Mammary epithelial cell (primary cell): ENCODE measurements at regions of chrX and their contacts with region 1.

Region 1: DNA sequence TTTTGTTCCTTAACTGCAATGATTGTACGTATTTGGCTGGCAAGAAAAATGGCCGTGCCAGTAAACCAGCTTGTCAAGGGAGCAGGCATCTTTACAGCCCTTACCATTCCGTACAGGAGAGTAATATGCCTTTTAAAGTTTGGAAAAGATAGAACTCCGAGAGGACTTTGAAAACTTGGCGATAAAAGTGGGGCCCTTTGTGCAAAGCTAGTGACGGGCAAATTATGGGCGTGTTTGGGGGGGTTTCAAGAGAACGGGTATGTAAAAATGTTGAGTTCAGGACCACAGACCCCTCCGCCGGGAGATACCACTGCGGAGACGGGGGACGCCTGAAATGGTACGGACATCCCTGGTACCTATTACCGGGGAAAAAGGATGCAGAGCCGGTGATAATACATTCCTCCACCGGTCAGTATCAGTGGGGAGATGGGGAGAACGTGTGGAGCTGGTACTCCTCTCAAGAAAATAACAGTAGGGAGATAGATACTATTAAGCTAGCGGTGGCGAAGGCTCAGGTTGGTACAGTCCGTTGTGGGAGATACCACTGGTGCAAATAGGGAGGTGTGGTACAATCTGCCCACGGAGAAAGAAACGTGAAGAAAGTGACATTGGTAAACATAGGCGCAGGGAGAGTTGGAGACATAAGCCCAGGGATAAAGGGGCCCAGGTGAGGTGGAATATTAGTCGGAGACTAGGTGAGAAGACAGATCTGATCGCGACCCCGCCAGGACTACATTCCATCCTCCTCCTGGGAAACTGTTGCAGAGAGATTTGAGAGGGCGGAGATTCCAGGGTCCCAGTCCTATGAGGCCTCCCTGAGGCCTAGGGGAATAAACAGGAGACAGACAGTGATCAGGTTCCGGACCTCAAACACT is 14.5 kb downstream of the SPACA5 start:
- DNase-seq: peak; percentile 76
- H3K4me3 ChIP-seq: peak overlapping the region; percentile 49 to 58 (median 56)
- H3K27ac ChIP-seq: peak overlapping the region; percentile 88
- H3K4me1 ChIP-seq: no peaks in the 10 kb centered on the region
- H3K27me3 ChIP-seq: no peaks in the 10 kb centered on the region
- CTCF ChIP-seq: no peak

Region 2: GRCh38 chrX:47430925-47431324 is 590.3 kb before region 1 on chrX:
- CTCF ChIA-PET with region 1: no interaction called
- dilution Hi-C with region 1: no loop called
- in situ Hi-C with region 1: no loop called
- intact Hi-C with region 1: no loop called
- DNase-seq: no peak
- H3K4me3 ChIP-seq: no peak overlapping the region
- H3K27ac ChIP-seq: no peak overlapping the region
- H3K4me1 ChIP-seq: no peaks in the 10 kb centered on the region
- H3K27me3 ChIP-seq: no peaks in the 10 kb centered on the region
- CTCF ChIP-seq: no peak

Region 3: GRCh38 chrX:47540754-47541538 is 480.3 kb before region 1 on chrX:
- CTCF ChIA-PET with region 1: no interaction called
- dilution Hi-C with region 1: no loop called
- in situ Hi-C with region 1: no loop called
- intact Hi-C with region 1: loop called (anchors 1 kb)
- DNase-seq: peak; percentile 80
- H3K4me3 ChIP-seq: no peak overlapping the region
- H3K27ac ChIP-seq: peak overlapping the region; percentile 3
- H3K4me1 ChIP-seq: no peaks in the 10 kb centered on the region
- H3K27me3 ChIP-seq: no peaks in the 10 kb centered on the region
- CTCF ChIP-seq: peak; percentile 42 to 67

Region 4: DNA sequence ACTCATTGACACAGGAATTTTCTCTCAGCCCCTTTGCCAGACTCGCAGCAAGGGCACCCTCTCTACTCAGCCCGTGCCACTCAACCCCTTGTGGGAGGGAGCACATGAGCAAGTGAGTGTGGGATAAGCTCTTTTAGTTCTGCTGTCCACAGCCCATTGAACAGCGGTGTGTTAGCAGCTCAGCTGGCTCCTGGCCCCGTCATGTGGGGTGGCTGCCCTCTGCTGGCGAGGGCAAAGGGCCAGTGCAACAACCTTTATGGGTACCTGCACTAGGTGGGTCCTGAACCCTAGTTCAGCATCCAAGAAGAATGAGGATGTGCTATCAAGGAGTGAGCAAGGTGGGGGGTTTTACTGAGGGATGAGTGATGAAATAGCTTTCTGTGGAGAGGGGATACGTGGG is 269.6 kb before region 1 on chrX:
- CTCF ChIA-PET with region 1: no interaction called
- dilution Hi-C with region 1: no loop called
- in situ Hi-C with region 1: no loop called
- intact Hi-C with region 1: loop called (anchors 5 kb)
- DNase-seq: peak; percentile 26
- H3K4me3 ChIP-seq: no peak overlapping the region
- H3K27ac ChIP-seq: no peak overlapping the region
- H3K4me1 ChIP-seq: no peaks in the 10 kb centered on the region
- H3K27me3 ChIP-seq: peaks cover 2% of the 10 kb centered on the region
- CTCF ChIP-seq: peak; percentile 48 to 75

Region 5: DNA sequence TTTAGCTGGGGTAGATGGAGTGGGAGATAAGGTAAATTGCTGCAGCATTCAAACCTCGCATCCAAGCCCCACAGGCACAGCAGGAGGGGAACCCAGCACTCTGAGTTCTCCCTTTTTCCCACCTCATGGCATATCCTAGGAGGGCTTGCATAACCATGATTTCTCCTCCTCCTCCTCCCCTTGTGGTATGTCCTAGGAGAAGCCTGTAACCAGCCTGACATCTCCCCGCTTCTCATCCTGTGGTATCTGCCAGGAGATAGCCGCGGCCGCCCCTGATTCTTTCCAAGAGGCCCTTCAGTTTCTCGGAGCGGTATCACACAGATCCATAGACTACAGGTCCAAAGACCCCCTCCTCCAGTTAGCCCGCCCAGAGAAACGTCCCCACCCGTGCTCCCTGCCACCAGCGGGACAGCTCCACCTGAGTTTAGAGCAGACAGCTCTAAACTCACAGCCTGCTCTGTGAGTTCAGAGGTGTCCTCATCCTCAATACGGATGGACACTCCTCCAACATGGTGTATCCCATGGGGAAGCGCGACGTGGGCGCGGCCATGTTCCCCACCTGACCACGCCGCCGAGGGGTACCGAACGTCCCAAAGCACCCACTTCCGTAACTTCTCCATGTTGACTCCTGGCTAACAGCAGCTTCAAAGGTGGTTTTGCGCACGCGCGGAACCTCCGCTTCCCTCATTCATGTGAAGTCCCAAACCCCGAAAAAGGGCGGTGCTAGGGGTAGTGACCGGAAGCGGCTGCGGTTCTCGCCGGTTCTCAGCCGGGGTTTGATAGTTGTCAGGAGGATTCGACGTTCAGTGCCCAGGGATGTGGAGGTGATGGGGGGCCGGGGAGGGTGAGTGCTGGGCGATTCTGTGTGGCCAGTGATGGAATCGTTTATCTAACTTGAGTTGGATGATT is 184.8 kb before region 1 on chrX and contains the start of gene ZNF81:
- CTCF ChIA-PET with region 1: no interaction called
- dilution Hi-C with region 1: no loop called
- in situ Hi-C with region 1: no loop called
- intact Hi-C with region 1: loop called (anchors 1 kb)
- DNase-seq: peak; percentile 94
- H3K4me3 ChIP-seq: peak within 1 kb of the TSS; percentile 55 to 59 (median 56)
- H3K27ac ChIP-seq: peak within 1 kb of the TSS; percentile 59
- H3K4me1 ChIP-seq: no peaks in the 10 kb centered on the region
- H3K27me3 ChIP-seq: no peaks in the 10 kb centered on the region
- CTCF ChIP-seq: no peak
- total RNA-seq, gene ZNF81: 6.1 to 7.8 TPM

Region 6: GRCh38 chrX:47958761-47959342 is 62.4 kb before region 1 on chrX:
- CTCF ChIA-PET with region 1: no interaction called
- dilution Hi-C with region 1: no loop called
- in situ Hi-C with region 1: no loop called
- intact Hi-C with region 1: loop called (anchors 5 kb)
- DNase-seq: no peak
- H3K4me3 ChIP-seq: no peak overlapping the region
- H3K27ac ChIP-seq: no peak overlapping the region
- H3K4me1 ChIP-seq: no peaks in the 10 kb centered on the region
- H3K27me3 ChIP-seq: no peaks in the 10 kb centered on the region
- CTCF ChIP-seq: peak in 1 of 2 donors; percentile 33

Region 7: GRCh38 chrX:48493890-48494364 is 472.7 kb after region 1 on chrX:
- CTCF ChIA-PET with region 1: no interaction called
- dilution Hi-C with region 1: no loop called
- in situ Hi-C with region 1: no loop called
- intact Hi-C with region 1: loop called (anchors 1 kb)
- DNase-seq: no peak
- H3K4me3 ChIP-seq: no peak overlapping the region
- H3K27ac ChIP-seq: no peak overlapping the region
- H3K4me1 ChIP-seq: peaks cover 46% of the 10 kb centered on the region
- H3K27me3 ChIP-seq: no peaks in the 10 kb centered on the region
- CTCF ChIP-seq: peak; percentile 25 to 45

Region 8: DNA sequence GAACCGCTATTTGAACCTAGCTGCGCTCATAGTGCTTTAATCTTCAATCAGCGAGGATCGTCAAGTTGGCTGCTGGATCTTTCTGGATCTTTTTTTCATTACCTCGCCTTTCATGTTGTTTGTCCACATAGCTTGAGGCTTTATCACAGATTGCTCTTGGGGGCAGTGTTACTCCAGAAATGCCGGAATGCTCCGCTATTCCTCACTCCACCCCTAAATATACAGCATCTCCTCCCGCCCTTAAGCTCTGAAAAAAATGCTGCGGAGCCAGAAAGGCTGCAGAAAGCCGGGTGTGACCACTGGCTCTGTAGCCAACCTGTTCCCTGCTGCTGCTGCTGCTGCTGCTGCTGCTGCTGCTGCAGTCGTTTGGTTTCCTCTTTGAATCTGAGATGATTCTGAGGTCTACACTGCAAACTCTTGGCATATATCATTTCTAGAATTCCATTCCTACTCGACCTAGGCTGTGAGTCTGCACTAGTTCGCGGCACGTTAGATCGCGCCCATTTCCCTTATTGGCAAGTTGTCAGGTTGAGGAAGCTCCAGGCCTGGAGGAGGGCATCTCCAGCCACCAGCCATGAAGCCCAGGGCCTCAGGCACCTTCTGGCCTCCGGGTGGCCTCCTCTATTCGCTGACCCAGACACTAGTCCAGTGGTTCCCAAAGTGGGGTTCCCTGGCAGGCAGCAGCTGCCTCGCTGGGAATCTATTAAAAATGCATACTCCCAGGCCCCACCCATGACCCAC is 610.3 kb after region 1 on chrX:
- CTCF ChIA-PET with region 1: no interaction called
- dilution Hi-C with region 1: no loop called
- in situ Hi-C with region 1: no loop called
- intact Hi-C with region 1: no loop called
- DNase-seq: peak; percentile 85
- H3K4me3 ChIP-seq: no peak overlapping the region
- H3K27ac ChIP-seq: no peak overlapping the region
- H3K4me1 ChIP-seq: no peaks in the 10 kb centered on the region
- H3K27me3 ChIP-seq: no peaks in the 10 kb centered on the region
- CTCF ChIP-seq: peak; percentile 28 to 55